BJ (cell line): ENCODE measurements at regions of chr7 and their contacts with region 1.

Region 1: DNA sequence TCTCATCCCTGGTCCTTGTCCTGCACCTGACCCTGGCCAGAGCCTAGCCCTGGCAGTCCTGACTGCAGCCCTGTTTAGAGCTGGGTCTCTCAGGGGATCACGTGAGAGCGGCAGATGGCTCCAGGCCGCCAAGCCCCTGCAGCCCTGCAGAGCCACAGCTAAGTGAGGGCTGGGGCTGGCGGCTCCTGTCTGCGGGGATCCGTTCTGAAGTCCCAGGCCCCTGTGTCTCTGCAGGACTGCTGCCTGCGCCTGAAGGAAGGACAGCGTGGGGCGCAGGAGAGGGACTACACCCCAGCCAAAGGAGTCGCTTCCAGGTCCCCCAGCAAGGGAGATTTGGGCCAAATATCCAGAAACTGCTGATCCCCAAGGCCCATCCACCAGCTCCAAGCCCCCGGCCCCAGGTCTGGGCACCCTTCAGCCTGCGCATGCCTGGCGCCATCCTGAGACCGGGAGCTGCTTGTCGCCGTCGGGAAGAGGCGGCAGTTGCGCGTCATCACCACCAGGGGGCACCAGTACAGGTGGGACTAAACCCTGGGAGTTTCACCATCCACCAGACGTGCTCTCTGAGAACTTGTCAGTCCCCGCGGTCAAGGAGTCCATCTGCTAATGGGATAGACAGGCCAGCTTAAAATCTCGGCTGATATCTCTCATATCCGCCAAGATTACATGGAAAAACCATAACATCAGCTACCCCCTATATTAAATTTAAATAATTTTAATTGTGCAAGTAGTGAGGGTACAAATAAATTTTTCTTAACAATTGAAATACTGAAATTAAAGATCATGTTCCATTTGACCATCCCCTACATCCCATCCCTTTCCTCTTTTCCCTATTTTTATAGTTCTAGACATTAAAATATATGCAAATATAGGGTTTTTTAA is 25.1 kb upstream of the GHRHR start:
- DNase-seq: no peak
- H3K4me3 ChIP-seq: no peak overlapping the region
- H3K27me3 ChIP-seq: peaks cover 13% of the 10 kb centered on the region
- CTCF ChIP-seq: peak; percentile 99

Region 2: DNA sequence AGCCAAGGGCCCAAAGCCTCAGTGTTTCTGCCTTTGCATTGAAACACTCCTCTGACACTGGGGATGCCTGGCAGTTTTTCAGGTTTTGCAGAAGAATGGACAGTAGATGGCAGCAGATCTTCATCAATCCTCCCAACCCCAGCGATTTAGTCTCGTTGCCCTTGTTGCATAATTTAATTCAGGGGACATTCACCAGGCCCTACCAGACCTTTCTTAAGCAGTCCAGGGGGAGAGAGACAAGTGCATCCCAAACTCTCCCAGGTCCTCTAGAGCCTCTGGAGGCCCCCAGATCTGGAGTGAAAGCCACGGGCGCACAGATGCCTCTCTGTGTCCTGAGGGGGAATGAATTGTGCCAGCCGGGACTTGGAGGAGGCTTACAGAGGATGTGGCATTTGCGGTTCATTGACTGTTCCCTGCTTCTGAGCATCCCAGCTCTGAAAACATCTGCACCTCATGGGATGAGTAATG is 137.9 kb before region 1 on chr7:
- CTCF ChIA-PET with region 1: interaction called, 17 read pairs
- POLR2A ChIA-PET with region 1: no interaction called
- DNase-seq: no peak
- H3K4me3 ChIP-seq: no peak overlapping the region
- H3K27me3 ChIP-seq: peaks cover 1% of the 10 kb centered on the region; the same call in 1 of the 2 replicates
- CTCF ChIP-seq: peak; percentile 69

Region 3: GRCh38 chr7:30920584-30921539 is 17.8 kb before region 1 on chr7:
- CTCF ChIA-PET with region 1: interaction called, 51 read pairs
- POLR2A ChIA-PET with region 1: no interaction called
- DNase-seq: no peak
- H3K4me3 ChIP-seq: no peak overlapping the region
- H3K27me3 ChIP-seq: no peaks in the 10 kb centered on the region
- CTCF ChIP-seq: no peak

Region 4: GRCh38 chr7:30968294-30968693 is 29.6 kb after region 1 on chr7:
- CTCF ChIA-PET with region 1: interaction called, 51 read pairs
- POLR2A ChIA-PET with region 1: no interaction called
- DNase-seq: no peak
- H3K4me3 ChIP-seq: no peak overlapping the region
- H3K27me3 ChIP-seq: peaks cover 25% of the 10 kb centered on the region
- CTCF ChIP-seq: no peak

Region 5: DNA sequence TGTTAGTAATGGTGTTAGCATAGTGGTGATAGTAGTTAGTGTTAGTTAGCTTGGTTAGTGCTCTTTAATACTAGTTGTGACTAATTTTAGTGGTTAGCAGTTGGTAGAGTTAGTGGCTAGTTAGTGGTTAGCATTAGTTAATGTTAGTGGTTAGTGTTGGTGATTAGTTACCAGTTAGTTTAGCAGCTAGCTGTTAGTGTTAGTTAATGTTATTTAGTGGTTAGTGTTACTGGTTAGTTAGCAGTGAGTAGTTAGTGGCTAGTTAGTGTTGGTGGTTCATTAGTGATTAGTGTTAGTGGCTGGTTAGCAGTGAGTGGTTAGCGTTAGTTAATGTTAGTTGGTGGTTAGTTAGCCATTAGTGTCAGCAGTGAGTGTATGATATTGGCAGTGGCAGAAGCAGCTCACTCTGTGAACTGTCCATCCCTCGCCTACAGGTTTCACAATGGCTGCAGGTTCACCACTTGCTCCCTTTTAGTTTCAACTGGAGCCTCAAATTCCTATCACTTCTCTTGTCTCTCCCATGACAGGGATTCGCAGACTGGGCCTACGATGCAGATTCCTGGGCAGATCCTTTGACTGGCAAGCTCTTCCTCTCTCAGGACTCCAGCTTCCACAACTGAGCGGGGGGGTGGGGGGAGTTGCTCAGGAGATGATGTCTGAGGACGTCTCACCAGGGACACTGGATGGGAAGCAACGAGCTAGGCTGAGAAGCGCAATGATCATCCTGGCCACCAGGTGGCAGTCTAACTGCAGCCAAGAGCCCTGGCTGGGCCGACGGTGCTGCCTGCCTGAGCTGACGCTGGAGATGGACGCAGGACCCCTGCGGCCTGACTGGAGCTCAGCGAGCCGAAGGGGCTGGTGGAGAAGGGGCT is 44.6 kb after region 1 on chr7:
- CTCF ChIA-PET with region 1: interaction called, 16 read pairs
- POLR2A ChIA-PET with region 1: no interaction called
- DNase-seq: no peak
- H3K4me3 ChIP-seq: no peak overlapping the region
- H3K27me3 ChIP-seq: peaks cover 6% of the 10 kb centered on the region
- CTCF ChIP-seq: peak; percentile 95

Region 6: DNA sequence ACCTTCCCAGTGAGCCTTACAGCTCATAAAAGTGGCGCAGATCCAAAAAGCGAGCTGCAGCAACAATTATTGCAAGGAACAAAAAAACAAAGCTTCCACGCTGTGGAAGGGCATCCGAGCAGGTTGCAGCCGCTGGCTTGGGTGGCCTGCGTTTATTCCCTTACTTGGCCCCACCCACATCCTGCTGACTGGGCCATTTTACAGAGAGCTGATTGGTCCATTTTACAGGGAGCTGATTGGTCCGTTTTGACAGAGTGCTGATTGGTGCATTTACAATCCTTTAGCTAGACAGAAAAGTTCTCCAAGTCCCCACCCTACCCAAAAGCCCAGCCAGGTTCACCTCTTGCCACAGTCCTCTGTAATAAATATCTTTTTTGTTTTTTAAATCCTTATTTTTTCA is 198.6 kb after region 1 on chr7:
- CTCF ChIA-PET with region 1: no interaction called
- POLR2A ChIA-PET with region 1: no interaction called
- DNase-seq: no peak
- H3K4me3 ChIP-seq: no peak overlapping the region
- H3K27me3 ChIP-seq: no peaks in the 10 kb centered on the region
- CTCF ChIP-seq: no peak